GM18951 (cell line): ENCODE measurements at regions of chr9 and their contacts with region 1.

Region 1: GRCh38 chr9:129783516-129784361 is 19.2 kb upstream of the TOR1B start:
- POLR2A ChIP-seq: no peak

Region 2: GRCh38 chr9:129139993-129140396 is 643.7 kb before region 1 on chr9:
- in situ Hi-C with region 1: loop called (anchors 25 kb)
- POLR2A ChIP-seq: peak; percentile 57

Region 3: GRCh38 chr9:129731477-129732100 is 52.1 kb before region 1 on chr9:
- in situ Hi-C with region 1: loop called (anchors 5 kb)
- POLR2A ChIP-seq: no peak